ENCODE measurements at regions of chr1 and their contacts with region 1.

Region 1: DNA sequence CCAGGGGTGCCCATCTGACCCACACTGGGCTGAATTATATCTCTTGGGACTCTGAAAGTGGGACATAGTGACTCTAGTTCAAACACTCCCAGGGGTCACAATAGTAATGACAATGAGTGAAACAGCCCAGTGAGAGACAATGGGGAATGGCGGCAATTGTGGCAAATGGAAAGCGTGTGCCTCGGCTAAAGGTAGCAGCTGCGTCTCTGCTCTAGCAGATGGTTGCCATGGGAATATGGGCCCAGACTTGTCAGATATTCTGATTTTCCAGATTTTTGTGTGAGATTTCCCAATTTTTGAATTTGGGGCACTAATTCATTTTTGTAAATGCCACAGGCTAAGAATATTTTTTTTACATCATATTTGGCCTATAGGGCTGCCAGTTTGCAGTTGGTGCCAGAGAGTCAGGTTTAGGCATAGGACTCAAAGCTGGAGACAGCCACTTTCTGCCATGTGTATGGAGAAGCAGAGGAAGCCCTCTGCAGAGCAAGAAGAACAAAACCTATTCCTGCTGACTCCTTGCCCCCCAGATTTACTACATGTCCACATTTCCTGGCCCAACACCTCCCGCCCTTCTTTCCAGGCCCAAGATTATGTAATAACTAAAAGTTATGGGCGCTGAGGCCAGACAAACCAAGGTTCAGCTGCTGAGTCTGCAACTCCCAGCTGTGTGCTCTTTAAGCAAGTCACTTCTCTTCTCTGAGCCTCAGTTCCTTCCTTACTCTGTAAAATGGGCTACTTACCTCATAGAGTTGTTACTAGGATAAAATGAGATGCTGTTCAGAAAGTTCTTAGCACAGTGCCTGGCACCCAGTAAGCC is 21.6 kb upstream of the PTP4A2 start:
- DNase-seq: no peak
- H3K27ac ChIP-seq: no peak overlapping the region
- CTCF ChIP-seq: no peak

Region 2: DNA sequence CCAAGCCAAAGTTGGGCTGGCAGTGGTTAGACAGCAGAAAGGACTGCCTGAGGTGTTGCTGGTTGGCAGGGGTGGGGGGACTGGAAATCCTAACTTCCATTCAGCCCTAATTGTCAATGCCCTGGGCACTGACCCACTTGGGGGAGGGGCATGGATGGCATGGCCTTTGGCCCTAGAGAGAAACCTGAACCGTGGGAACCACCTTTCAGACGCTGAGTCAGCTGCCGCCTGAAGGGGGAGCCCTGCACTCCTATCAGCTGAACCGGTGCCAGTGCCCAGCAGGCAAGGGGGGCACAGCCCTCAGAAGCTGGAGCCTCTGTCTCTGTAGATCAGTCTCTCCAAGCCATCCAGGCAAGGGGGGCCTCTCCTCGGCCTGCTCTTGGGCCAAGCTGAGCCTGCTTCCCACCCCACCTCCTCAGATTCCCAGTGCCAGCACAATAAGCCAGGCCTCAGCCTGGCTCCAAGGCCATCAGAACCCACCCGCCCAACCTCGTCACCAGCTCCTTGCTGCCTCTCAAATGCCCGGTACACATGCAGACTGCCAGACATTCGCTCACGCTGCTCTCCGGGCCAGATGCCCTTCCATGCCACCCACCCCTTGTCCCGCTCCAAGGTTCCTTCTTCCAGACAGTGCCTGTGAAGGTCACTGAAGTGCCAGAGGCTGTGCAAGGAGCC is 371.9 kb before region 1 on chr1:
- CTCF ChIA-PET with region 1: no interaction called
- POLR2A ChIA-PET with region 1: no interaction called
- DNase-seq: peak; percentile 76
- H3K27ac ChIP-seq: peak overlapping the region; percentile 68
- CTCF ChIP-seq: peak; percentile 74

Region 3: DNA sequence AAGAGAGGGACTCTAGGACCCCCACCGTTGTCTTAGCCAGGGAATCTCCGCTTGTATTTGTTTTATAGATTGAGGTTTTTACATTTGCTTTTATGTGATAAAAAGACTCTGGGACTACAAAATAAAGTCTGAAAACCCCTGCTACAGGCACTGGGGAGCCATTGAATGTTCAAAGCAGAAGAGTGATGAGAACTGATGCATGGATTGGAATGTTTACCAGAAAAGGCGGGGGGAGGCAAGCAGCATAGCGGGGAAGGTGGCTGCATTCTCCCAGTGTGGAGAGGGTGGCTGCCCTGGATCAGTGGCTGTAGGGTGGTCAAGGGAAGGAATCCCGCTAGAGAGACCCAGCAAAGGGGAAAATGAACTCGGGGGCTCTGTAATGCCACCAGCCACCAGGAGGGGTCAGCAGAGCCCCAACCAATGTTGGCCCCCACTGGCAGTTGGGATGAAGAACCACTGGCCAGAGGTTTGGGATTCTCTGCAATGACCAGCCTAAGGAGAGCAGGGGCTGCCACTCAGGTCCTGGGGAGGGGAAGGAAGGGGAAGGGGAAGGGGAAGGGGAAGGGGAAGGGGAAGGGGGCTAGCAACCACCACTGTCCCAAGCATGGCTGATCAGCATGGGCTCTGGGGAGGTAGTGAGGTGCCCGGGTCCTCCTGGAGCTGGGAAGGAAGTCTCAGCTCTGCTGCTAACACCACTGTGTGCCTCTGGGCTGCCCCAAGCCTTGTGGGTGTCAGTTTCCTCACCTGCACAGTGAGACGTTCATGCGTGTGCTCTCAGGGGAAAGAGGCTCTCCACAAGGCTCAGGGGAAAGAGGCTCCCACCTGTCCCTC is 295.9 kb before region 1 on chr1:
- CTCF ChIA-PET with region 1: interaction called, 10 read pairs
- POLR2A ChIA-PET with region 1: no interaction called
- DNase-seq: peak; percentile 59
- H3K27ac ChIP-seq: peak overlapping the region; percentile 97
- CTCF ChIP-seq: peak; percentile 82

Region 4: DNA sequence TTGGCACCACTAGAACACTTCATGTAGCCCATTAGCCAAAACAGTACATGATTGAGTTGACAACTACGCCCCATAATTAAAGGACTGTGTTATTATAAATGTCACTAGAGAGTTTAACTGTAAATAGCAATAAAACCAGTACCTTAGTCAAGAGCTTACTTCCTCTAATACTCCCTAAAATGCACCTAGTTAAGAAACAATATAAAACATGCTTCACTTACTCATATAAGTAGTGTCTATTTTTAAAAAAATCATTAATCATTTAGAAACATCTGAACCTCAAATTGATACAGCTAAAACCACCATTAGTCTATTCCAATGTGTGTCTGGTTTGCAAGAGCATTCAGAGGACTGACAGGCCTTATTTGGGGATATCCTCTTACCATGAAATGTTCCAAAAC is 46.9 kb before region 1 on chr1:
- CTCF ChIA-PET with region 1: no interaction called
- POLR2A ChIA-PET with region 1: no interaction called
- DNase-seq: no peak
- H3K27ac ChIP-seq: no peak overlapping the region
- CTCF ChIP-seq: no peak

Region 5: DNA sequence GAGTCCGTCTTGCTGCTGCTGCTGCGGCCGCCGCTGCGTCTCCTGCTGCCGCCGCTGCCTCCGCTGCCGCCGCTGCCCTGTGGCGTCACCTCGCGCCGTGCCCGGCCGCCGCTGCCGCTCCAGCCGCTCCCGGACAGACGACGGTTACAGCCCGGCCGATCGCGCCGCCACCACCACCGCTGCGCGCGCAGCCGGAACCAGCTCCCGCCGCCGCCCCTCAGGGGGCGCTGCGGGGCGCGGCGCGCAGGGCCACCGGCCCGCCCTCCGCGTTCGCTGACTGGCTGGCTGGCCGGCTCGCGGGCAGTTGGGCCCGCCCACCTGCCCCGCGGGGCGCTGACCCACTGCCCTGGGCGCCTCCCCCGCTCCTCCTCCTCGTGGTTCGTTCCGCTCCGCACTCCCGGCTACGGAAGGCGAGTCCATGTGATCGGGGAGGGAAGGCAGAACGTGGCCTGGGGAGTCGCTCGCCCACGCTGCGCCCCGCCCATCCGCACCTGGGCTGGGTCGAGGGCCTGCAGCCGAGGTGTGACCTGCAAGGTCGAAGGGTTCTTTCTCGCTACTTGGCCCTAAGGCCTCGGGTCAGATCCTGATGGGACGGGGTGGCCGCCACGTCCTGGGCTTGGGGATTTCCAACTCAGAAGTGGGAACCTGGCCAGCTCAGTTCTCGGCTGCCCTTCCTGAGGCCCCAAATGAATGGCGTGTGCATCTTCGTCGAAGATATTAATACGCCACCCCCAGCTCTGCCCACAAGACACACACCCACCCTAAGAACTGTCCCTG is 21.4 kb before region 1 on chr1 and contains the start of gene PTP4A2:
- CTCF ChIA-PET with region 1: interaction called, 41 read pairs
- POLR2A ChIA-PET with region 1: no interaction called
- DNase-seq: peak; percentile 97
- H3K27ac ChIP-seq: peak within 1 kb of the TSS; percentile 95
- CTCF ChIP-seq: peak; percentile 81

Region 6: GRCh38 chr1:31944205-31945089 is 15.3 kb before region 1 on chr1:
- CTCF ChIA-PET with region 1: interaction called, 41 read pairs
- POLR2A ChIA-PET with region 1: interaction called, 5 read pairs
- DNase-seq: peak; percentile 73
- H3K27ac ChIP-seq: peak overlapping the region; percentile 98
- CTCF ChIP-seq: no peak

Region 7: GRCh38 chr1:31984419-31985347 is 25.0 kb after region 1 on chr1:
- CTCF ChIA-PET with region 1: no interaction called
- POLR2A ChIA-PET with region 1: no interaction called
- DNase-seq: no peak
- H3K27ac ChIP-seq: no peak overlapping the region
- CTCF ChIP-seq: no peak

Measured in RWPE1 (cell line).